Endothelial cell of umbilical vein (primary cell): ENCODE measurements at regions of chr13 and their contacts with region 1.

Region 1: GRCh38 chr13:87570669-87571068 is 100.5 kb upstream of the SLITRK5 start:
- DNase-seq: no peak
- H3K4me3 ChIP-seq: no peak overlapping the region
- H3K27ac ChIP-seq: no peak overlapping the region
- H3K4me1 ChIP-seq: no peaks in the 10 kb centered on the region
- H3K27me3 ChIP-seq: no peaks in the 10 kb centered on the region
- CTCF ChIP-seq: no peak
- POLR2A ChIP-seq: no peak

Region 2: GRCh38 chr13:86581711-86582110 is 989.0 kb before region 1 on chr13:
- CTCF ChIA-PET with region 1: no interaction called
- POLR2A ChIA-PET with region 1: interaction called, 13 read pairs
- dilution Hi-C with region 1: no loop called
- intact Hi-C with region 1: no loop called
- DNase-seq: no peak
- H3K4me3 ChIP-seq: no peak overlapping the region
- H3K27ac ChIP-seq: no peak overlapping the region
- H3K4me1 ChIP-seq: no peaks in the 10 kb centered on the region
- H3K27me3 ChIP-seq: no peaks in the 10 kb centered on the region
- CTCF ChIP-seq: no peak
- POLR2A ChIP-seq: no peak